A673 (cell line): ENCODE measurements at regions of chr17 and their contacts with region 1.

Region 1: GRCh38 chr17:45234641-45235415 is 13.1 kb downstream of the FMNL1 start:
- DNase-seq: no peak
- H3K4me3 ChIP-seq: no peak overlapping the region
- H3K27ac ChIP-seq: no peak overlapping the region
- H3K4me1 ChIP-seq: no peaks in the 10 kb centered on the region
- H3K27me3 ChIP-seq: no peaks in the 10 kb centered on the region
- CTCF ChIP-seq: peak; percentile 37; the same call in 1 of the 2 replicates

Region 2: DNA sequence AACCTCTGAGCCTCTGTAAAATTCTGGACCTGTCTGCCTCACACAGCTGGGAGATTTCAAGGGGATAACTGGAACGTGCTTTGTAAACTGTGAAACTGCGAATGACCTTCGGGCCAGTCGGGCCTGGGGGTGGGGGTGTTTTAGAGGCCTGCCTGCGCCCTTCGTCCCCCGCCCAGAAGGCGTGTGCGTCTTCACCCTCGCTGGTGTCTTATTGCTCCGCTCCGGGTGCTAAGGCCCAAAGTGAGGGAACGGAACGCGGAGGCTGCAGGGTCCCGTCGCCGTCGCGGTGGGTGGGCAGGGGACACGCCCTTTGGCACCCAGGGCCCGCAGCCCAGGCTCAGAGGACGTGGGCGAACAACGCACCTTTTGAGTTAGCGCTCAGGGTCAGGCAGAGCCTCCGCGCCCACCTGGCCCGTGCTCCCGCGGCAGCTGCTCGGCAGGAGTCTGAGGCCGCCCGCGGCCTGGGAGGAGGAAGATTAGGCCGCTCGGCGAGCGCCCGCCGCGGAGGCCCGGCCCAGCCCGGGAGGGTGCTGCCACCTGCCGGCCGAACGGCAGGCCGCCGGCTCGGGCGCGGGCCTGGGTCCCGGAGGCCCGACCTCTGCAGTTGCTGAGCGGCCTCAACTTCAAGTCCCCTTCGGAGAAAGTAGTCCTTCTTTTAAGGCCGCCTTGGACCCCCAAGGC is 213.1 kb before region 1 on chr17:
- CTCF ChIA-PET with region 1: no interaction called
- POLR2A ChIA-PET with region 1: no interaction called
- intact Hi-C with region 1: no loop called
- DNase-seq: peak; percentile 60
- H3K4me3 ChIP-seq: peak overlapping the region; percentile 36
- H3K27ac ChIP-seq: no peak overlapping the region
- H3K4me1 ChIP-seq: no peaks in the 10 kb centered on the region
- H3K27me3 ChIP-seq: no peaks in the 10 kb centered on the region
- CTCF ChIP-seq: peak; percentile 55; the same call in 1 of the 2 replicates

Region 3: DNA sequence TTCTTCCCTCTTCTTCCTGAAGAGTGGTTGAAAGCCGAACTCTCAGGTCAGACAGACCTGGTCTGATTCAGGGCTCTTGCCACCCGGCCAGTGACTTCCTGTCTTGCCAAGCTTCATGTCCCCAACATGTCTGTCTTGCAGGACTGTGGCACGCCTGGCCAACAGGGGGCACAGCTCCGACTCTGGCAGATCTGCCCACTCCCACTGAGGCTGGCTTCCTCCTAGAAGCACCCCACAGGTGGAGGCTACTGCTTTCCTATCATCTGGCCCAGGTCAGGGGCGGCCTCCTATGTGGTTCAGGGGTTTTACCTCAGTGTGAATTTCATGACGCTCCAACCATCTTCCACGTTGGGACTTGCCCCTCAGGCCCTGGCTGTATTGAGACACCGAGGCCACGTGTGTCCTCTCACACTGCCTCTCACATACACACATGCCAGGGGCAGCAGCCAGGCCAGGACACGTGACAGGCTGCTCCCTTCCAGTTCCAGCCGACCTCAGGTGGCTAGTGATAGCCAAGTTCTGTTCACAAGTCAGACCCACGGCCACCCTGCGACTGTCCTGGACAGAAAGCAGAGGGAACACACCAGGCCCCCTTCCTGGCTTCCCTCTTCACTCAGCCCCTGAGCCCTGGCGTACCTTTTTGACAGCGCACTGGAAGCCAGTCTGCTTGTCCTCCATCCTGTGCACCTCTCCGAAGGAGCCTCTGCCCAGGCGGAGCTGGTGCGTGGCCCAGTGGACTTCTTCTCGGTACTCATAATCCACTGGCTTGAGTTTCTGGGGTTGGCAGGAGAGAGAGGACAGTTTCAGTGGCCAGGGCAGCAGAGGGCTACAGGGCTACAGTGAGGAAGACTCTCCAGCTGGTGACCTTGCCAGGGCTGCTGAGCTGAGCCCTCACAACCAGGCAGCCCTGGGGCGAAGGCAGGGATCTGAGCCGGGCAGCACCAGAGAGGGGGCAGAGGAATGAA is 49.6 kb after region 1 on chr17:
- CTCF ChIA-PET with region 1: interaction called, 10 read pairs
- POLR2A ChIA-PET with region 1: no interaction called
- intact Hi-C with region 1: no loop called
- DNase-seq: no peak
- H3K4me3 ChIP-seq: no peak overlapping the region
- H3K27ac ChIP-seq: no peak overlapping the region
- H3K4me1 ChIP-seq: no peaks in the 10 kb centered on the region
- H3K27me3 ChIP-seq: no peaks in the 10 kb centered on the region
- CTCF ChIP-seq: no peak

Region 4: DNA sequence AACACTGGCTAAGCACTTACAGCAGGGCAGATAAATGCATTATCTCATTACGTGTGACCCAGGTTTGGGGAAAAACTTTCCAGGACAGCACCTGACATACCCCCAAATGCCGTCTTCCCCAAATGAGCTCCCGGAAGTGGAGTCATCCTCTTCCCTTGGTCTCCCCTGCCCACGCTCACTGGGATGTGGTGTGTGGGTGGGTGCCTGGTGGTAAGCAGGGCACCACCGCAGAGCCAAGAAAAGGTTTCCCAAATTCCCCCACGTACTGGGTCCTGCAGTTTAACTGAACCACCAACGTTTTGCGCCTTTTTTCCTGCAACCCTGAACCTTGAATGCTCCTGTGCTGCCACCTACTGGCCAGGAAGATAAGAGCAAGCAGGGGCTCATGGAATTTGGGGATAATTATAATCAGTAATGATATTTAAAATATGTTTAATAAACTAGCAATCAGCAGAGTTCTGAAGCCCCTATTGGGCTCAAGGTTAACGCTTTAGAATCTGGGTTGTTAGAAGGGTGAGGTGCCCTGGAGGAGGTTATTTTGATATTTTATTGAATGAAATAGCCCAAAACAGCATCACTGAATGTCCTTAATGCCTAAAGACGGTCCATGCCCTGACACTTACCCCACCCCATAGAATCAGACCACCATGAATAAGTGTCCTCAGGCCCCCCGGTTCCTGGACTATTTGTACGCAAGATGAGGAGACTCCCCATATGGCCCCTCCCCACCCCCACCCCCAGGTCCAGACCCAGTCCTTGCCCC is 617.9 kb after region 1 on chr17:
- CTCF ChIA-PET with region 1: no interaction called
- POLR2A ChIA-PET with region 1: no interaction called
- intact Hi-C with region 1: no loop called
- DNase-seq: peak; percentile 58
- H3K4me3 ChIP-seq: no peak overlapping the region
- H3K27ac ChIP-seq: no peak overlapping the region
- H3K4me1 ChIP-seq: no peaks in the 10 kb centered on the region
- H3K27me3 ChIP-seq: no peaks in the 10 kb centered on the region
- CTCF ChIP-seq: peak; percentile 76